CD8-positive, alpha-beta T cell (primary cell): ENCODE measurements at regions of chr10 and their contacts with region 1.

Region 1: GRCh38 chr10:23516530-23516929 is 77.7 kb downstream of the OTUD1 start:
- DNase-seq: peak in 2 of 9 experiments; percentile 22 to 40
- ATAC-seq: no peak
- H3K4me3 ChIP-seq: no peak overlapping the region
- H3K4me3 Mint-ChIP-seq: no peak overlapping the region
- H3K27ac ChIP-seq: no peak overlapping the region
- H3K27ac Mint-ChIP-seq: no peak overlapping the region
- H3K4me1 ChIP-seq: no peaks in the 10 kb centered on the region
- H3K4me1 Mint-ChIP-seq: no peaks in the 10 kb centered on the region
- H3K27me3 ChIP-seq: no peaks in the 10 kb centered on the region
- H3K27me3 Mint-ChIP-seq: peaks cover 21% of the 10 kb centered on the region
- CTCF ChIP-seq: peak; percentile 40

Region 2: GRCh38 chr10:23535381-23535780 is 18.9 kb after region 1 on chr10:
- CTCF ChIA-PET with region 1: interaction called, 12 read pairs
- POLR2A ChIA-PET with region 1: interaction called, 3 read pairs
- intact Hi-C with region 1: no loop called
- DNase-seq: no peak
- ATAC-seq: no peak
- H3K4me3 ChIP-seq: no peak overlapping the region
- H3K4me3 Mint-ChIP-seq: no peak overlapping the region
- H3K27ac ChIP-seq: no peak overlapping the region
- H3K27ac Mint-ChIP-seq: peak overlapping the region; percentile 20
- H3K4me1 ChIP-seq: peaks cover 25% of the 10 kb centered on the region
- H3K4me1 Mint-ChIP-seq: peaks cover 46% of the 10 kb centered on the region
- H3K27me3 ChIP-seq: no peaks in the 10 kb centered on the region
- H3K27me3 Mint-ChIP-seq: no peaks in the 10 kb centered on the region
- CTCF ChIP-seq: no peak

Region 3: DNA sequence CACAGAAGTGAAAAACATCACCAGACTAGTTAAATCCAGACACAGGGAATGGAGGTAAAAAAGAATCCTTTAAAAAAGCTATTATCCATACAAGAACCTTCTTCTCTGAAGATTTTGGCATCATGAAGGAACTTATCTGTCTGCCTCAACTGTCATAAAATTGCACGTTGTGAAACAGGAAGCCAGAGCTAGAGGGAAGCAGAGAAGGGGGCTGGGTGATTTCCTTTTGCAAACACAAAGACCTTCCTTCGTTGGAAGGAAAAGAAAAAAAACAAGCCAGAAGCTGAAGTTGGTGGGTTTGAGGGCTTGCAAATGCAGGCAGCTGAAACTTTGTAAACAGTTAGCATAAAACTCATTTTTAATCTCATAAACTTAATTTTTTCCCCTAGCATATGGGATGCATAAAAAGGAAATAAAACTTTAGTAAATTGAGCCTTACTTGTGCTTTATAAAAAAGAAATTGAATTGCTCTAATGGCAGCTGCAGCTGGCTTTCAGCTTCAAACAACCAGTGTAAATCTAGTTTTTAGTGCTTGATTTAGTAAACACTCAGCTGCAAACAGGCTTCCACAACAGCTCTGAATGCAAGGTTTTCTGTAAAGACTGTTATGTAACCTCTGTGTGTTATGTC is 24.0 kb after region 1 on chr10:
- CTCF ChIA-PET with region 1: interaction called, 12 read pairs
- POLR2A ChIA-PET with region 1: no interaction called
- intact Hi-C with region 1: no loop called
- DNase-seq: peak in 3 of 9 experiments; percentile 8 to 53 (median 18)
- ATAC-seq: peak; percentile 40
- H3K4me3 ChIP-seq: no peak overlapping the region
- H3K4me3 Mint-ChIP-seq: peak overlapping the region; percentile 68
- H3K27ac ChIP-seq: peak overlapping the region in 1 of 2 experiments; percentile 48
- H3K27ac Mint-ChIP-seq: peak overlapping the region; percentile 89
- H3K4me1 ChIP-seq: peaks cover 43% of the 10 kb centered on the region
- H3K4me1 Mint-ChIP-seq: peaks cover 52% of the 10 kb centered on the region
- H3K27me3 ChIP-seq: no peaks in the 10 kb centered on the region
- H3K27me3 Mint-ChIP-seq: no peaks in the 10 kb centered on the region
- CTCF ChIP-seq: no peak

Region 4: GRCh38 chr10:23656735-23657134 is 140.2 kb after region 1 on chr10:
- CTCF ChIA-PET with region 1: interaction called, 25 read pairs
- POLR2A ChIA-PET with region 1: no interaction called
- intact Hi-C with region 1: loop called in 1 of 2 experiments (anchors 1 kb)
- DNase-seq: peak in 2 of 9 experiments; percentile 9 to 26
- ATAC-seq: no peak
- H3K4me3 ChIP-seq: no peak overlapping the region
- H3K4me3 Mint-ChIP-seq: no peak overlapping the region
- H3K27ac ChIP-seq: no peak overlapping the region
- H3K27ac Mint-ChIP-seq: no peak overlapping the region
- H3K4me1 ChIP-seq: no peaks in the 10 kb centered on the region
- H3K4me1 Mint-ChIP-seq: no peaks in the 10 kb centered on the region
- H3K27me3 ChIP-seq: no peaks in the 10 kb centered on the region
- H3K27me3 Mint-ChIP-seq: no peaks in the 10 kb centered on the region
- CTCF ChIP-seq: peak; percentile 35

Region 5: DNA sequence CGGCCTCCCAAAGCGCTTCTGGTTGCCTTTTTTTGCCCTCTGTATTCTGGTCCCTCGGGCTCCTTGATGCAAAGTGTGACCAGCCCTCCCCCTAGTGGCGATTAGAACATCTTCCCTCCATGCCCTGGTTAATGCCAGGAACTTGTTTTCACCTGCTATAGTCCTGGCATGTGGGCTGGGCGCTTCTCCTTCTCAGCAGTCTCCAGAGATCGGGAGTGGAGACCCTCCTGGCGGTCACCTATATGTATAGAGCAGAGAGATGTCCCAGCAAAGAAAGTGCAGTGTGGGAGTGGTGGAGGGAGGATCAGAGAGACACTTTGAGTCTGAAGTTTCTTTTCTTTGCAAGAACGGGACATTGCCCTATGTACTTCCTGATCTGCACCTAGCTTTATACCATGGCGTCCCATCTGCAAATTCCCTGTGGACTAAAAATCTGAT is 186.5 kb after region 1 on chr10:
- CTCF ChIA-PET with region 1: interaction called, 12 read pairs
- POLR2A ChIA-PET with region 1: no interaction called
- intact Hi-C with region 1: loop called (anchors 1 kb)
- DNase-seq: peak in 8 of 9 experiments; percentile 19 to 72 (median 51)
- ATAC-seq: peak; percentile 57
- H3K4me3 ChIP-seq: no peak overlapping the region
- H3K4me3 Mint-ChIP-seq: no peak overlapping the region
- H3K27ac ChIP-seq: no peak overlapping the region
- H3K27ac Mint-ChIP-seq: no peak overlapping the region
- H3K4me1 ChIP-seq: no peaks in the 10 kb centered on the region
- H3K4me1 Mint-ChIP-seq: peaks cover 6% of the 10 kb centered on the region
- H3K27me3 ChIP-seq: no peaks in the 10 kb centered on the region
- H3K27me3 Mint-ChIP-seq: peaks cover 16% of the 10 kb centered on the region
- CTCF ChIP-seq: peak; percentile 60

Region 6: DNA sequence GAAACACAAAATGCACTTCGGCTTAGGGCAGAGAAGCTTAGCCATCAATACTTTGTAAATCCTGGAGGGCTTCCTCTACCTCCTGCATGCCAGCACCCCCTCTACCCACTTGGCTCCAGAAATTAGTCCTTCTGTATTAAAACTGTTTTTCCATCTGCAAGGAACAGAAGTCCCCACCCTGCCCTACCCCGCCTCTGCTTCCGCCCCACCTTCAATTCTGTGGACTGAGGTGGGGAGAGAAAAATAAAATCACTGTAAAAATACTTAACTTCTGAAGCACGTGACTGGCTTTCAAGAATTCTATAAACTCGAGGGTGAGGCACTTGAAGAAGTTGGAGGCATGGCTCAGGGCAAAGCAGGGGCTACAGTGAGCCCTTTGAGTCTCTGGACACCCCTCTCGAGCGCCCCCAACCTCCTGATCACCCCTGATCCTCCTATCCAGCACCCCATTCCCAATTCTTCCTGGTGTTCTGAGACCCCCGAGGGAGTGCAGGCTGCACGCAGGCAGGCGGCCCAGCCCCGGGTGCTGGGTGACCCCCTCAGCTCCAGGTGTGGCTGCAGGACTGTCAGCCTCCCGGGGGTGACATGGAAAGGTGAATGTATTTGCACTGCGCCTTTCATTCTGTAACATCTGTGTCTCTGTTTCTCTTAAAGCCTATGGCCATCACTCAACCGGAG is 685.1 kb after region 1 on chr10:
- CTCF ChIA-PET with region 1: no interaction called
- POLR2A ChIA-PET with region 1: no interaction called
- intact Hi-C with region 1: loop called in 1 of 2 experiments (anchors 2 kb)
- DNase-seq: no peak
- ATAC-seq: no peak
- H3K4me3 ChIP-seq: no peak overlapping the region
- H3K4me3 Mint-ChIP-seq: no peak overlapping the region
- H3K27ac ChIP-seq: no peak overlapping the region
- H3K27ac Mint-ChIP-seq: no peak overlapping the region
- H3K4me1 ChIP-seq: no peaks in the 10 kb centered on the region
- H3K4me1 Mint-ChIP-seq: no peaks in the 10 kb centered on the region
- H3K27me3 ChIP-seq: no peaks in the 10 kb centered on the region
- H3K27me3 Mint-ChIP-seq: peaks cover 6% of the 10 kb centered on the region
- CTCF ChIP-seq: no peak